Activated B cell treated with CpG ODN at 0.5 μM for 24 hours (primary cell): ENCODE measurements at regions of chr22 and their contacts with region 1.

Region 1: GRCh38 chr22:21567456-21568346 is at the start of gene UBE2L3:
- DNase-seq: peak; percentile 86
- ATAC-seq: peak; percentile 92
- H3K4me3 Mint-ChIP-seq: peak within 1 kb of the TSS; percentile 89
- H3K27ac Mint-ChIP-seq: peak within 1 kb of the TSS; percentile 82
- H3K4me1 Mint-ChIP-seq: peaks cover 44% of the 10 kb centered on the region
- H3K27me3 Mint-ChIP-seq: no peaks in the 10 kb centered on the region
- CTCF ChIP-seq: no peak
- total RNA-seq, gene UBE2L3: 39.8 and 43.3 TPM in 2 replicates

Region 2: DNA sequence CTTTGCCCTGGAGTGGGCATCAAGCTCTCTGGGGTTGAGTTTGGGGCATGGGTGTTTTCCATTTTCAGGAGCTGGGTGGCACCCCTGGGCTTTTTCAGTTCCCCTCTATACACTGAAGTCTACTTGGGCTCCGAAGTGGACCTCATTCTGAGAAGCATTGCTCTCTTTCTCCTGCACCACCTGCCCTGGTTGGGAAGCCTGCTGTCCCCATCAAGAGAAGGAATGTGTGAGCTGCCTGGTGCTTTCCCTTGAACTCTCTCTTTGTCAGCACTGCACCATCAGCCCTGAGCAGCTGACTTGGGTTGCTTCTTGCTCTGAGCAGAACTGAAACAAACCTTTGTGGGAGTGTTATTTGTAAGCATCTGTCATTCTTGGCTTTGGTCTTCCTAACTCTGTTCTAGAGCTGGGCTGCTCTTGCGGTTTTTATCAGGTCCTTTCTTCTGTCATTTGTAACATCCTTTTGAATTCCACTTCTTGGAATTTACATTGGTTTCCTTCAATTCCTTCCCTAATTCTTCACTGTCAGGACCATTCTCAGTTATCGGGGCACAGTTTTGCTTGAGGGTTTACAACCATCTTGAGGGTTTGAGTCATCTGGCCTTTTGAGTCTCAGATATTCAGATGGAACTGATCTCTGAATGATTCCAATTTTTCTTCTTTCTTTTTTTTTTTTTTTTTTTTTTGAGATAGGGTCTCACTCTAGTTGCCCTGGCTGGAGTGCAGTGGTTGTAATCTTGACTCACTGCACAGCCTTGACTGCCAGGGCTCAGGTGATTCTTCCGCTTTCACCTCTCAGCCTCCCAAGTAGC is 20.3 kb after region 1 on chr22:
- CTCF ChIA-PET with region 1: no interaction called
- POLR2A ChIA-PET with region 1: interaction called, 4 read pairs
- intact Hi-C with region 1: loop called (anchors 1 kb)
- DNase-seq: peak; percentile 27
- ATAC-seq: peak; percentile 88
- H3K4me3 Mint-ChIP-seq: peak overlapping the region; percentile 45
- H3K27ac Mint-ChIP-seq: peak overlapping the region; percentile 83
- H3K4me1 Mint-ChIP-seq: peaks cover 66% of the 10 kb centered on the region
- H3K27me3 Mint-ChIP-seq: no peaks in the 10 kb centered on the region
- CTCF ChIP-seq: no peak